Transverse colon (tissue), 4 donors: ENCODE measurements at regions of chr3 and their contacts with region 1.

Region 1: DNA sequence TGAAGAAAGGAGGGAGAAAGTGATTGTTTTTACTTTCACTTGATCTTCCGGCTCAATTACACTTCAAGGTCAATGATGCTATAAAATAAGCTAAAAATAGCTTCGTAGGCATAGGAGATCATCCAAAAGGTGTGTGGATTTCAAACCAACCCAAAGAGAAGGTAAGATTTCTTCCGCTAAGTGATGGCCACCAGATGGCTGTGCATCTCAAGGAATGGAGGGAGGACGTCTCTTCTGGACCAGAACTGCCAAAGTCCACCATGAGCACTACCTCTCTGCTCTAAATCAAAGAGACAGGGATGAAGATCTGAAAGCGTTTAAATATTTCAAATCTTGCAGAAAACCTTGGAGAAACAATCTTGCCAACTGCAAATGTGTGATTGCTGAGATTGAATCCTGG is 199.1 kb upstream of the ZPLD1 start:
- DNase-seq: no peak
- H3K4me3 ChIP-seq: no peak overlapping the region
- H3K27ac ChIP-seq: no peak overlapping the region
- H3K4me1 ChIP-seq: peaks cover 0 to 20% (median 3%) of the 10 kb centered on the region in 4 donors
- H3K27me3 ChIP-seq: no peaks in the 10 kb centered on the region
- CTCF ChIP-seq: peak in 3 of 5 experiments; percentile 6 to 67 (median 56)
- EP300 ChIP-seq: no peak
- POLR2A ChIP-seq: no peak

Region 2: GRCh38 chr3:101803173-101803782 is 432.4 kb before region 1 on chr3:
- in situ Hi-C with region 1: no loop called
- intact Hi-C with region 1: no loop called
- DNase-seq: peak; percentile 51
- H3K4me3 ChIP-seq: no peak overlapping the region
- H3K27ac ChIP-seq: no peak overlapping the region
- H3K4me1 ChIP-seq: peaks cover 0 to 11% (median 4%) of the 10 kb centered on the region in 4 donors
- H3K27me3 ChIP-seq: no peaks in the 10 kb centered on the region
- CTCF ChIP-seq: peak; percentile 80 to 90 (median 83)
- EP300 ChIP-seq: no peak
- POLR2A ChIP-seq: no peak

Region 3: DNA sequence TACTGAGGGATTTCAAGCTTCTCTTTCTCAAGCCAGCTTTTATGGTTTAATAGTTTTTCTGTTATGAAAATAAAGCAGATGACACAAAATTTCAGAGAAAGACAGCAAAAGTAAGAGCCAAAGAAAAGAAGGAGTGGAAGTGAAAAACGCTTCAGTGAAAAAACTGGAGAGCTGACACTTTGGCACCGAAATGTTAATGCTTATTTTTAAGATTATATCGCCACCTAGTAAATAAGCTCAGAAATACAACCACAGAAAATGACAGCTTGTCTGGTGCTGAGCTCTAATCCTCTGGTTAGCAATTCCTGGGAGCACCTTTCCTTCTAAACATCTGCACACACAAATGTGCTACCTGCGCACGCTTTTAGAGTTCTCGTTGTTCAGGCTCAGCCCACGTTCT is 300.8 kb after region 1 on chr3:
- in situ Hi-C with region 1: loop called (anchors 5 to 25 kb)
- intact Hi-C with region 1: no loop called
- DNase-seq: no peak
- H3K4me3 ChIP-seq: no peak overlapping the region
- H3K27ac ChIP-seq: no peak overlapping the region
- H3K4me1 ChIP-seq: no peaks in the 10 kb centered on the region
- H3K27me3 ChIP-seq: no peaks in the 10 kb centered on the region
- CTCF ChIP-seq: peak; percentile 31 to 48 (median 36)
- EP300 ChIP-seq: no peak
- POLR2A ChIP-seq: no peak